Caco-2 (cell line): ENCODE measurements at regions of chr5 and their contacts with region 1.

Region 1: DNA sequence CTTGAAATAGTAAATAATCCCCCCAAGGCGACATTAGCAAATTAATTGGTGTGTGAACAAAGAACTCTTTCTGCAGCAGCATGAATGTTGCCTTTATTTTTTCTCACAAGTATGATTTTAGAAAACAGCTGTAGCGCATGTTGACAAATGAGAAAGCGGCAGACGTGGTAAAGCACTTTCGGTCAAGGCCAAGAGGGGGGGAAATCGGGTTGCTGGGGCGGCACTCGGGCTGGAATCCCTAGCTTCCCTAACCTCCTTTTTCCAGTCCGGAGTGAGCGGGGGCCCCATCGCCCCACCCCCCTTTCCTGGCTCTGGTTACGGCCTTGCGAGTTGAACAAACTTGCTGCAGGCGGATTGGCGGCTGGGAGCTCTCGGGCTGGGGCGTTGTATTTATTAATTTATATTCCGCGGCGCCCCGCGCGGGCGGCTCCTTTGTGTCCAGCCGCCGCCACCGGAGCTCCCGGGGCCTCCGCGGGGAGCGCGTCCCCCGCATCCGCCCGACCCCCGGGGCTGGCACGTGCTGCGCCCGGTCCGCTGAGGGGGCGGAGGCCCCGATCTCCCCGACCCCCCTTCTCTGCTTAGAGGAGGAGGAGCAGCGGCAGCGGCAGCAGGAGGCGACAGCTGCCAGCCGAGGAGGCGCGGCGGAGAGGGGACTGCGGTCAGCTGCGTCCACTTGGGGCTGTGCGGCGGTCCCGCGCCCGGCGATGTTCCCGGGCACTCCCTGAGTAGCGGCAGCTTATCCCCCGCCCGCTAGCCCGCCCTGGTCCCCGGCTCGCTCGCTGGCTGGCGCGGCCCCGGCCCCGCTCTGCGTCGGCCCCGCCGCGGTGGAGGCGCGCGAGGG is at the start of gene RHOBTB3:
- DNase-seq: peak; percentile 90 to 94
- H3K4me3 ChIP-seq: peak within 1 kb of the TSS; percentile 97
- H3K4me3 Mint-ChIP-seq: peak within 1 kb of the TSS; percentile 96
- H3K27ac Mint-ChIP-seq: peak within 1 kb of the TSS; percentile 94
- H3K4me1 ChIP-seq: peaks cover 55% of the 10 kb centered on the region
- H3K4me1 Mint-ChIP-seq: peaks cover 38% of the 10 kb centered on the region
- H3K27me3 ChIP-seq: no peaks in the 10 kb centered on the region
- H3K27me3 Mint-ChIP-seq: no peaks in the 10 kb centered on the region
- CTCF ChIP-seq: peak in 1 of 2 experiments; percentile 3
- total RNA-seq, gene RHOBTB3: 85.6 and 88.5 TPM in 2 replicates

Region 2: GRCh38 chr5:95646554-95647431 is 84.2 kb before region 1 on chr5 and contains the start of gene RFESD:
- CTCF ChIA-PET with region 1: interaction called, 10 read pairs
- POLR2A ChIA-PET with region 1: interaction called, 41 read pairs
- intact Hi-C with region 1: loop called (anchors 1 kb)
- DNase-seq: peak; percentile 99
- H3K4me3 ChIP-seq: peak within 1 kb of the TSS; percentile 27
- H3K4me3 Mint-ChIP-seq: peak within 1 kb of the TSS; percentile 82
- H3K27ac Mint-ChIP-seq: peak within 1 kb of the TSS; percentile 89
- H3K4me1 ChIP-seq: peaks cover 8% of the 10 kb centered on the region; the same call in 1 of the 2 replicates
- H3K4me1 Mint-ChIP-seq: peaks cover 7% of the 10 kb centered on the region
- H3K27me3 ChIP-seq: no peaks in the 10 kb centered on the region
- H3K27me3 Mint-ChIP-seq: no peaks in the 10 kb centered on the region
- CTCF ChIP-seq: peak; percentile 12 to 45
- total RNA-seq, gene RFESD: 1.6 and 2.4 TPM in 2 replicates

Region 3: DNA sequence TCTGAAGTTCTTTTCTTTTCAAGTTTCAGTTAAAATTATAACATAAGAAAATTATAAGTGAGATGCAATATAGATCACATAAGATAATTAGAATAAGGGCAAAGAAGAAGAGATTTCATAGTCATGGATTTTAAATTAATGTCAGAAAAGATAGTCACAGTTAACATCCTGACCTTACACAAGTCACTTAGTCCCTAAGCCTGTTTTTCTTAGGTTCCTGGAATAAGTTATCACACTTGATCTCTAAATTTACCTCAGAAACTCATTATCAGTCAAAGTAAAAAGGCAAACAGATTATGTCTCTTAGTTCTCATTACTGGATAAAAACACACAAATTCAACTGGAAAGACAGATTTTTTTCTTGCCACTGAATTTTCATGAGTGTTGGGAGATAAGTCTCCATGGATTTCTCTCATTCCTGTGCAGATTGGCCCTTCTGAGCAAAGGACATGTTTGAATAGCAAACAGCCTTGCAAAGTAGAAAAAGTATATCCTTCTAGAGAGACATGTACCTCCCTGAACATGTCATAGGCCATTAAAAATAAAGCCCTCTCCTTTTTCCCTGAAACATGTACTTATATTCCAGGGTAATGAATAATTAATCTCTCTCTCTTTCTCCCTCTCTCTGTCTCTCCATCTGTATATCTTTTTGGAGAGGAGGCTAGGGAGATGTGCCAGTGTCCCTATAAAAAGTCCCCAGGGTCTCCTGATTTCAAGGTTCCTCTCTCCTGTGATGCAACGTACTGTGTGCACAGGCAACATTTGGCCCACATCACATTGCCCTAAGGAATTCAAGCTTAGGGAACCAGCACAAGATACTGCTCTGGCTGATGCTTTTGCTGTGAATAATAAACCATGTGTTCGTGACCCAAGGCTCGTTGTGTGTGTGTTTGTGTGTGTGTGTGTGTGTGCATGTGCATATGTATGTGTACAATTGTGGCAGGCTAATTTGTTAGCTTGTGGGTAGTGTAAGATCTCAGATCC is 58.2 kb before region 1 on chr5:
- CTCF ChIA-PET with region 1: interaction called, 3 read pairs
- POLR2A ChIA-PET with region 1: interaction called, 3 read pairs
- intact Hi-C with region 1: loop called (anchors 1 kb)
- DNase-seq: peak; percentile 69 to 73
- H3K4me3 ChIP-seq: no peak overlapping the region
- H3K4me3 Mint-ChIP-seq: peak overlapping the region; percentile 10
- H3K27ac Mint-ChIP-seq: peak overlapping the region; percentile 86
- H3K4me1 ChIP-seq: peaks cover 43% of the 10 kb centered on the region
- H3K4me1 Mint-ChIP-seq: peaks cover 35% of the 10 kb centered on the region
- H3K27me3 ChIP-seq: no peaks in the 10 kb centered on the region
- H3K27me3 Mint-ChIP-seq: no peaks in the 10 kb centered on the region
- CTCF ChIP-seq: no peak

Region 4: DNA sequence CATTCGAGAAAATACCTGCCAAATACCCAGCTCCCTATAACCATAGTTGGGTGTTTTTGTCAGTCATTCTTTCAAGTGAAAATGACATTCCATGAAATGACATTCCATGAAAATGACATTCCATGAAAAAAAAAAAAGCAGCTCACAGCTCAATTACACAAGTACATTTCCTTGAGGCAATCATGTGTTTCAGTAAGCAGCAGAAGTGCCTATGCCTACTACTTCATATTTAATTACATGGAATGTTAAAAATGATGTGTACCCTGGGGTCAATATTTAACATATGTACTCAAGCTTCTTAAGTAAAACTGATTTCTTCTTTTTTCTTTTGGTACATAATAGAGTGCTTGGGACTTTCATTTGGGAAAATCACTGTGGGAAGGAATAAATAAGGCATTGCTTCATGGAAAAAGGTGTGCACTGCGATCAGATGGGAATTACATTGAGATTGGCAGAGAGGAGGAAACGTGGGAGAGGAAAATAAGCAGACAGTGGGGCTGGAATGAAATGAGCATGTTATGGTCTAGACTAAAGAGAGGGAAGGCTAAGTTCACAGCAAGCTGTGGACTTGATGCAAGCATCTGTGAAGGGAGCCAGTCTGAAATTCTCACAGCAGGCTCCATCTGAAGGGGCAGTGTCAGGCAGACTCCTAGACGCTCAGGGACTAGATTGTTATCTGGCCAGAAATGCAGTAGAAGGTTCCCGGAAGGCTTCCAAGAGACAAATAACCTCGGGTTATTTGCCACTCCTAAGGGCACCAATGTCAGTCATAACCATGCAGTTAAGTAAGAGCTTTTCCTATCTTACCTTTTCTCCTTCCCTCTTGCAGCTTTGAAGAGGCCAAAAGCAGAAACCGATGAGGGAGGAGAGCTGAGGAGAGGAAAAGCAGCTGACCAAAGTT is 32.9 kb before region 1 on chr5:
- CTCF ChIA-PET with region 1: interaction called, 3 read pairs
- POLR2A ChIA-PET with region 1: interaction called, 3 read pairs
- intact Hi-C with region 1: loop called (anchors 1 kb)
- DNase-seq: peak; percentile 51 to 65
- H3K4me3 ChIP-seq: no peak overlapping the region
- H3K4me3 Mint-ChIP-seq: no peak overlapping the region
- H3K27ac Mint-ChIP-seq: peak overlapping the region; percentile 17
- H3K4me1 ChIP-seq: peaks cover 25% of the 10 kb centered on the region
- H3K4me1 Mint-ChIP-seq: peaks cover 10% of the 10 kb centered on the region
- H3K27me3 ChIP-seq: no peaks in the 10 kb centered on the region
- H3K27me3 Mint-ChIP-seq: no peaks in the 10 kb centered on the region
- CTCF ChIP-seq: no peak

Region 5: GRCh38 chr5:95759634-95760033 is 28.7 kb after region 1 on chr5:
- CTCF ChIA-PET with region 1: no interaction called
- POLR2A ChIA-PET with region 1: interaction called, 3 read pairs
- intact Hi-C with region 1: loop called (anchors 1 kb)
- DNase-seq: peak; percentile 49 to 56
- H3K4me3 ChIP-seq: no peak overlapping the region
- H3K4me3 Mint-ChIP-seq: no peak overlapping the region
- H3K27ac Mint-ChIP-seq: peak overlapping the region; percentile 67
- H3K4me1 ChIP-seq: peaks cover 30% of the 10 kb centered on the region
- H3K4me1 Mint-ChIP-seq: peaks cover 14% of the 10 kb centered on the region
- H3K27me3 ChIP-seq: no peaks in the 10 kb centered on the region
- H3K27me3 Mint-ChIP-seq: no peaks in the 10 kb centered on the region
- CTCF ChIP-seq: no peak